Caco-2 (cell line): ENCODE measurements at regions of chr11 and their contacts with region 1.

Region 1: GRCh38 chr11:17730608-17731462 is 3.7 kb upstream of the KCNC1 start:
- DNase-seq: peak; percentile 81 to 90
- H3K4me3 ChIP-seq: no peak overlapping the region
- H3K4me3 Mint-ChIP-seq: no peak overlapping the region
- H3K27ac Mint-ChIP-seq: no peak overlapping the region
- H3K4me1 ChIP-seq: peaks cover 12% of the 10 kb centered on the region; the same call in 1 of the 2 replicates
- H3K4me1 Mint-ChIP-seq: no peaks in the 10 kb centered on the region
- H3K27me3 ChIP-seq: no peaks in the 10 kb centered on the region; the same call in 1 of the 2 replicates
- H3K27me3 Mint-ChIP-seq: peaks cover 21% of the 10 kb centered on the region
- CTCF ChIP-seq: peak; percentile 84 to 94

Region 2: DNA sequence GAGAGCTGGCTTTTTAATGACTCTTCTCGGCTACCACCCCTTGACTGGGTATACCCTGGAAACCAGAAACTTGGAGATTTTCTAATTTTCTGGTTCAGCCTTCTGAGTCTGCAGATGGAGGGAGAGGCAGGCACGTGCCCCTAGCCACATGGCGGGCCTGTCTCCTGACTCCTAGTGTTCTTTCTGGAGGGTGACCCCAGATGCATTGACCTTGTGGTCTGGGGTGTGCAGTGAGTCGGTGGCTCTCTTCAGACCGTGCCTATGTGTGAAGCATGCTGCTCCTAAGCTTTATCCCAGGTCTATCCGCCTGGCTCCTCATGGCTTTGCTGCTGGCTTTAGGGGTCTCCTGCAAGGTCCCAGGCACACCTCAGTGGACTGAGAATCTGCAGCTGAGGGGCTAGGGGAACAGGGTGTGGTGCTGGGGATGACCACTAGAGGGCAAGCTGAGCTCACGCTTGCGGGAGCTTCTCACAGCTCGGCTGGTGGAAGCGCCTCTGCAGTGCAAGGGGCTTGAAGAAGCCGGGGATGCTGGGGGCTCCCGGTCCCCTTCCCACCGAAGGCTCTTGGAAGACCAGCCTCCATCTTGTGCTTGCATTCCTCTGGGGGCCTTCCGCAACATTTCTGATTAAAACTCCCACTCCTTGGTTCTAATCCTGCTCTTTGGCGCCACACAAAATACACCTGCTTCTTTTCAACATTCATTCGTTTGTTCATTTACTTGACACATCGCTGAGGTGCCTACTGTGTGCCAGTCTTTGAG is 132.0 kb before region 1 on chr11:
- CTCF ChIA-PET with region 1: interaction called, 41 read pairs
- POLR2A ChIA-PET with region 1: no interaction called
- intact Hi-C with region 1: loop called (anchors 1 kb)
- DNase-seq: peak; percentile 73 to 85
- H3K4me3 ChIP-seq: no peak overlapping the region
- H3K4me3 Mint-ChIP-seq: no peak overlapping the region
- H3K27ac Mint-ChIP-seq: no peak overlapping the region
- H3K4me1 ChIP-seq: no peaks in the 10 kb centered on the region
- H3K4me1 Mint-ChIP-seq: no peaks in the 10 kb centered on the region
- H3K27me3 ChIP-seq: no peaks in the 10 kb centered on the region
- H3K27me3 Mint-ChIP-seq: peaks cover 7% of the 10 kb centered on the region
- CTCF ChIP-seq: peak; percentile 97 to 98

Region 3: GRCh38 chr11:17673951-17674350 is 56.9 kb before region 1 on chr11:
- CTCF ChIA-PET with region 1: no interaction called
- POLR2A ChIA-PET with region 1: no interaction called
- intact Hi-C with region 1: no loop called
- DNase-seq: no peak
- H3K4me3 ChIP-seq: no peak overlapping the region
- H3K4me3 Mint-ChIP-seq: no peak overlapping the region
- H3K27ac Mint-ChIP-seq: no peak overlapping the region
- H3K4me1 ChIP-seq: no peaks in the 10 kb centered on the region
- H3K4me1 Mint-ChIP-seq: no peaks in the 10 kb centered on the region
- H3K27me3 ChIP-seq: peaks cover 4% of the 10 kb centered on the region
- H3K27me3 Mint-ChIP-seq: peaks cover 33% of the 10 kb centered on the region
- CTCF ChIP-seq: no peak

Region 4: DNA sequence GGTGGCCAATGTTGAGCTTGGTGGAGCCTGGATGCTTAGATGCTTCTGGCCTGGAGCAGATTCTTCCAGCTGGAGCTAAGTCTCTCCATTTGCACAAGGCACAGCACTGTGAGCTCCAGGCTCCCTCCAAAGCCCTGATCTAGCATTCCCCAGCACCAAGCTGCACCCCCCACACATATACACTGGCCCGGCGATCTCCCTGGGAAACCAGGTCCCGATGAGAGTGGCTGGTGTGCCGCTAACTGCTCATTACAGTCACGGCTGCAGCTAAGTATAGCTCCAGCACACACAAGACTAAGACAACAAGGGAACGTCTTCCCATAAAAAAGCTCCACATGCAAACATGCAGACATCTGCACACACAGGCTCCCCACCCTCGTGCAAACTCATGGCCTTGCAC is 21.3 kb after region 1 on chr11:
- CTCF ChIA-PET with region 1: interaction called, 14 read pairs
- POLR2A ChIA-PET with region 1: no interaction called
- intact Hi-C with region 1: no loop called
- DNase-seq: no peak
- H3K4me3 ChIP-seq: no peak overlapping the region
- H3K4me3 Mint-ChIP-seq: no peak overlapping the region
- H3K27ac Mint-ChIP-seq: no peak overlapping the region
- H3K4me1 ChIP-seq: no peaks in the 10 kb centered on the region
- H3K4me1 Mint-ChIP-seq: no peaks in the 10 kb centered on the region
- H3K27me3 ChIP-seq: no peaks in the 10 kb centered on the region
- H3K27me3 Mint-ChIP-seq: peaks cover 24% of the 10 kb centered on the region
- CTCF ChIP-seq: no peak

Region 5: GRCh38 chr11:17906436-17906835 is 175.6 kb after region 1 on chr11:
- CTCF ChIA-PET with region 1: interaction called, 20 read pairs
- POLR2A ChIA-PET with region 1: no interaction called
- intact Hi-C with region 1: loop called (anchors 1 kb)
- DNase-seq: peak; percentile 44 to 67
- H3K4me3 ChIP-seq: no peak overlapping the region
- H3K4me3 Mint-ChIP-seq: no peak overlapping the region
- H3K27ac Mint-ChIP-seq: no peak overlapping the region
- H3K4me1 ChIP-seq: no peaks in the 10 kb centered on the region
- H3K4me1 Mint-ChIP-seq: no peaks in the 10 kb centered on the region
- H3K27me3 ChIP-seq: no peaks in the 10 kb centered on the region
- H3K27me3 Mint-ChIP-seq: no peaks in the 10 kb centered on the region
- CTCF ChIP-seq: peak; percentile 56 to 72

Region 6: DNA sequence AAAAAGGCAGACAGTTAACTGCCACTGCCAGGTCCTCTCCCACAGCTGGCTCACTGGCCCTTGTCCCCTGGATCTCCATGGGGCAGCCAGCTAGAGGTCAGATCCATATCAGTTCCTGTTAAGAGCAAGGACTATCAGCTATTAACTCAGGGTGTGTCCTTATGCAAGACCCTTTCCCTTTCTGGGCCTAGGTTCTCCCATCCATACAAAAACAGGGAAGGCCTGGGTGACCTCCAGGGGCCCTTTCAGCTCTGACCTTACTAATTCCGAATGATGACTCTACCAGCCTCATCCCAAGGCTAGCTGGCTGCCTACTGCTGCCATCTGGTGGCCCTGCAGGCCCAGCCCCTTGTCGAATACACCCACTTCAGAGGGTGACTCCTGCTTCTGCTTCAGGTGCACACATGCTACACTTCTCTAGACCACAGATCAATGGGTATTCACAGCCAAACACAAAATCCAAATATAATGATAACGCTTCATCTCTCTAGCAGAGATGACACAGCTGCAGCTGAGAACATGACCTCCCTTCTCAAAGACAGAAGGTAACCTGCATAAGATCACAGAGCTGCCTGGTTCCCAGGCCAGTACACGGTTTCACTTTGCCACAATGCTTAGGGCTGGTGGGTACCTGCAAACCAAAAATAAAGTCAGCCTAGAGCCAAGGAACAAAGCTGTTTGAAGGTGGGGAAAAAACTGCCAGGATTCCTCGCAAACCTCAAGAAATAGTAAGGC is 247.9 kb after region 1 on chr11:
- CTCF ChIA-PET with region 1: interaction called, 55 read pairs
- POLR2A ChIA-PET with region 1: no interaction called
- intact Hi-C with region 1: loop called (anchors 1 kb)
- DNase-seq: peak; percentile 69 to 73
- H3K4me3 ChIP-seq: no peak overlapping the region
- H3K4me3 Mint-ChIP-seq: no peak overlapping the region
- H3K27ac Mint-ChIP-seq: no peak overlapping the region
- H3K4me1 ChIP-seq: no peaks in the 10 kb centered on the region
- H3K4me1 Mint-ChIP-seq: no peaks in the 10 kb centered on the region
- H3K27me3 ChIP-seq: no peaks in the 10 kb centered on the region
- H3K27me3 Mint-ChIP-seq: no peaks in the 10 kb centered on the region
- CTCF ChIP-seq: peak; percentile 79 to 96